ENCODE measurements at regions of chr4 and their contacts with region 1.

Region 1: GRCh38 chr4:54064295-54065111 is at the start of gene CHIC2:
- DNase-seq: peak; percentile 70 to 88
- H3K4me3 ChIP-seq: peak within 1 kb of the TSS; percentile 90
- H3K27ac ChIP-seq: peak within 1 kb of the TSS; percentile 59
- H3K4me1 ChIP-seq: peaks cover 41% of the 10 kb centered on the region
- H3K27me3 ChIP-seq: no peaks in the 10 kb centered on the region
- CTCF ChIP-seq: no peak
- total RNA-seq, gene CHIC2: 8.7 and 12.1 TPM in 2 replicates

Region 2: DNA sequence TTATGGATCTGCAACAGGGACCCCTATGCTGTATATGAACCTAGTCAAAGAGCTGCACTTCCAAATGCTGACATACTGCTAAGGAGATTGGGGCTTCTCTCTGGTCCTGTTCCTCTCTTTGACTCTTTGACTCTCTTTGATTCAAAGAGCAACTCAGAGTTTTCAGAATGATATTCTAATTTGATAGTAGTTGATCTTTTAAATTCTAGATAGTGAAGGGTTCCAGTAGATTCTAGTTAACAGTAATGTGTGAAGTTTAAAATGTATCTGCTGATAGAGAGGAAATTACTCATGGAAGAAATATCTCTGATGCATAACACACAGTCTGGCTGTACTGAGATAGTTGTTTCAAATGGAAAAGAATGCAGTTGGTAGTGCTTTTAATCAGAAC is 963.3 kb before region 1 on chr4:
- CTCF ChIA-PET with region 1: no interaction called
- POLR2A ChIA-PET with region 1: no interaction called
- intact Hi-C with region 1: no loop called
- DNase-seq: no peak
- H3K4me3 ChIP-seq: no peak overlapping the region
- H3K27ac ChIP-seq: no peak overlapping the region
- H3K4me1 ChIP-seq: no peaks in the 10 kb centered on the region
- H3K27me3 ChIP-seq: no peaks in the 10 kb centered on the region
- CTCF ChIP-seq: no peak

Region 3: DNA sequence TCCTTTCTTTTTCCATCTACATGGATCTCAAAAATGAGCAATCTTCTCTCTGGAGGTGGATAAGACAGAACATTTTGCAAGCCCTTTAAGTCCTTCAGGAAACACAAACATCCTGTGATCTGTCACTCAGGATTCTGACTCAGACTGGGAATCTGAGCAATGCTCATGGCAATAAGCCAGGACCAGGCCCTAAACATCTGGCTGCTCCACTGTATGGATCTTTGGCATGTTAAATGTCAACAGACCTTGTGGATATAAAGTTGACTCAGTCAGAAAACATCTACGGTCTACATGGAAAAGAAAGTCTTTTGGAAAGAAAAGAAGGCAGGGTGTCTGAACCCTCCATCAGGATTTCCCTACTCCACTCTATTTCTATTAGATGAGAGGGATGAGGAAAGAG is 17.7 kb after region 1 on chr4:
- CTCF ChIA-PET with region 1: interaction called, 3 read pairs
- POLR2A ChIA-PET with region 1: no interaction called
- intact Hi-C with region 1: loop called (anchors 2 kb)
- DNase-seq: peak; percentile 73 to 91
- H3K4me3 ChIP-seq: no peak overlapping the region
- H3K27ac ChIP-seq: no peak overlapping the region
- H3K4me1 ChIP-seq: peaks cover 39% of the 10 kb centered on the region
- H3K27me3 ChIP-seq: no peaks in the 10 kb centered on the region
- CTCF ChIP-seq: no peak

Region 4: GRCh38 chr4:54152846-54153600 is 88.5 kb after region 1 on chr4:
- CTCF ChIA-PET with region 1: no interaction called
- POLR2A ChIA-PET with region 1: no interaction called
- intact Hi-C with region 1: loop called (anchors 5 kb)
- DNase-seq: peak; percentile 28 to 37
- H3K4me3 ChIP-seq: no peak overlapping the region
- H3K27ac ChIP-seq: no peak overlapping the region
- H3K4me1 ChIP-seq: no peaks in the 10 kb centered on the region
- H3K27me3 ChIP-seq: no peaks in the 10 kb centered on the region
- CTCF ChIP-seq: no peak

Region 5: GRCh38 chr4:54217642-54218495 is 153.4 kb after region 1 on chr4:
- CTCF ChIA-PET with region 1: no interaction called
- POLR2A ChIA-PET with region 1: no interaction called
- intact Hi-C with region 1: loop called (anchors 10 kb)
- DNase-seq: peak; percentile 48 to 61
- H3K4me3 ChIP-seq: peak overlapping the region; percentile 49; the same call in 1 of the 2 replicates
- H3K27ac ChIP-seq: no peak overlapping the region
- H3K4me1 ChIP-seq: no peaks in the 10 kb centered on the region; the same call in 1 of the 2 replicates
- H3K27me3 ChIP-seq: no peaks in the 10 kb centered on the region
- CTCF ChIP-seq: peak; percentile 88